Activated naive CD4-positive, alpha-beta T cell treated with anti-CD3 and anti-CD28 coated beads, Interleukin-2, amount 10 ng/mL, durations not matched to agents 7 days and 5 days (primary cell): ENCODE measurements at regions of chr5 and their contacts with region 1.

Region 1: GRCh38 chr5:115634343-115635132 is 8.7 kb upstream of the TMED7 start:
- DNase-seq: peak; percentile 89
- H3K4me3 Mint-ChIP-seq: peak overlapping the region; percentile 53
- H3K27ac Mint-ChIP-seq: peak overlapping the region; percentile 37
- H3K4me1 Mint-ChIP-seq: peaks cover 24% of the 10 kb centered on the region
- H3K27me3 Mint-ChIP-seq: peaks cover 34% of the 10 kb centered on the region

Region 2: GRCh38 chr5:115571441-115571878 is 63.1 kb before region 1 on chr5:
- CTCF ChIA-PET with region 1: no interaction called
- DNase-seq: no peak
- H3K4me3 Mint-ChIP-seq: no peak overlapping the region
- H3K27ac Mint-ChIP-seq: no peak overlapping the region
- H3K4me1 Mint-ChIP-seq: no peaks in the 10 kb centered on the region
- H3K27me3 Mint-ChIP-seq: peaks cover 8% of the 10 kb centered on the region

Region 3: DNA sequence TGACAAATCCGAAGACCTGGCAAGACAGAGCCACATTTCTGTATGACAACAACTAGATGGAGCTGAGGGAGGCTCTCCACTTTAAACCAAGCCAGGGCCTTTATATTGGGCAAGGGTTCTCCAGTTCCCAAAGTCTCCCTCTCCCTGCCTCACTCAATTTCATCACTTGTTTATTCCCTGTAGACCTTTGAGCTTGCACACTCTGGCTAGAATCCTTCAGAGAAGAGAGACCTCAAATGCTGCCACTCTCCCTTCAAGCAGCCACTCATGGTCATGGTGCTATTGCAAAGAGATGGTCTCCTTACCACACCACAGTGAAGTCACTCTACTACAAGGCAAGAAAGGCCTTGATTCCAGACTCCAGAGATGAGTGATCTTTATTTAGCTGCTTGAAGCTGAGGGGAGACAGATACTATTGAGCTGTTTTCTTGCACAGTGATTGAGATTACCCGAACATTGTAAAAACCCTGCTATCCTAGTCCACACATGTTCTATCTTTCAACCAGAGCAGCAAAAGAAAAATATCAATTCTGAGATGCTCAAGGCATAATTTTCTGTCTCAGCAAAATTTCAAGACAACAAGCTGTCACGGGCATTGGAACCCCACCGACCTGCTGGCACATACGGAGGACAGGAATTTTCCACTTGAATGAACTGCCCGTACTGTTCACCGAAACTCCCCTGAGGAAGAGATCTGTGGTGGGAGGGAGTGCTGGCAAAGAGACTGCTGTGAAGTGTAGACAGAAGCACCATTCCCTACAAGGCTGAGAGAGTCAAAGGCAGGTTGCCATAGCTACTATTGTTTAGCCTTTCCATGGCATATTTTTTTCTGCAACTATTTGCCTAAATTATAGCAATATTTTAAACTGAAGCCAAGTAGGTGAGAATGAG is 100.8 kb after region 1 on chr5:
- CTCF ChIA-PET with region 1: no interaction called
- DNase-seq: no peak
- H3K4me3 Mint-ChIP-seq: no peak overlapping the region
- H3K27ac Mint-ChIP-seq: no peak overlapping the region
- H3K4me1 Mint-ChIP-seq: peaks cover 3% of the 10 kb centered on the region
- H3K27me3 Mint-ChIP-seq: peaks cover 30% of the 10 kb centered on the region

Region 4: DNA sequence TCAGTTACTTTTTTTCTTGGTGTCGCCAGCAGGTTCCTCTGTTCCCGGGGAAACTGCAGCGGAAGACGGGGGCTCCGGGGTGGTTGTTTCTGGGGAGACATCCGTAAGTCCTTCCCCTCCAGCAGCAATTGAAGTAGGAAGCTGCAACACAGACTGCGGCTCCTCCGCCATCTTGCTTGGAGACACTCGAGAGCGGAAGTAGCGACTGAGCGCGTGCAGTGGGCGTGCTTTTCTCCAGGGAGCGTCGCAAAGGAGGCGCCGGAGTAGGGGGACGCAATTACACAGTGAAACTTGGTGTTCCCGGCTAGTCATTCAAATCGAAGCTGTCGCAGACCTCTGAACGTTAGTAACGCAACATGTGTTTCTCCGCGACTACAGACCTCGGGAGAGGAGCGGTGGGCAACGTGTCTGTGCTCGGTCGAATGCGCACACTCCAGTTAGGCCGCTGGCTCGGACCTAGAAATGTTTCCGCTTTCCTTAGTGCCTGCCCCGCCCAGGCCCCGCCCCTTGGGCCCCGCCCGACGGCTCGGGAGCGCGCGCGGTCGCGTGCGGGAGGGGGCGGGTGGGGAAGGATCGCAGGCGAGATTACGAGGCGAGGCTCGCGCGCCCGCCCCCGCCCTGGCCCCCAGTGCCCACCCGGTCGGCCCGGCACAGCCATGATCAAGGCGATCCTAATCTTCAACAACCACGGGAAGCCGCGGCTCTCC is 207.0 kb after region 1 on chr5 and contains the starts of genes AP3S1 and ATG12:
- CTCF ChIA-PET with region 1: interaction called, 19 read pairs
- DNase-seq: peak; percentile 95
- H3K4me3 Mint-ChIP-seq: peak within 1 kb of the TSS; percentile 98
- H3K27ac Mint-ChIP-seq: peak within 1 kb of the TSS; percentile 99
- H3K4me1 Mint-ChIP-seq: peaks cover 58% of the 10 kb centered on the region
- H3K27me3 Mint-ChIP-seq: no peaks in the 10 kb centered on the region

Region 5: GRCh38 chr5:116068028-116068632 is 433.6 kb after region 1 on chr5:
- CTCF ChIA-PET with region 1: interaction called, 21 read pairs
- DNase-seq: peak; percentile 35
- H3K4me3 Mint-ChIP-seq: no peak overlapping the region
- H3K27ac Mint-ChIP-seq: no peak overlapping the region
- H3K4me1 Mint-ChIP-seq: no peaks in the 10 kb centered on the region
- H3K27me3 Mint-ChIP-seq: peaks cover 20% of the 10 kb centered on the region

Region 6: DNA sequence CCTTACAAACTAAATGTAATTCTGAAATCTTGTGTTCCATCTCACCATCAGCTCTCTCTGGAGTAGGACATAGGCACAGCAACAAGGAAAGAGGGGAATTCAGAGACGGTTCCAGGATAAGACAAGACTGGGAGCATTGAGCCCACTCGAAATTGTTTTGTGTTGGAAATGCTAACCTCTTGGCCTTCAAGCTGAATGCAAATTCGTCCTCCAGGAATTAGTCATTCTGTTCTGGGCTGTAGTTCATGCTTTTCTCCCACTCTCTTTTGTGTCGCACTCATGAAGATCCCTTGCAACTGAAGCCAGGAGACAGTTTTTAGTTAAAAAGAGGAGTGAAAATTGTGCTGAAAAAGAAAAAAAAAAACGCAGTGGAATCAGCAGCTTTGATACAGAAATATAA is 1061.8 kb after region 1 on chr5:
- CTCF ChIA-PET with region 1: no interaction called
- DNase-seq: no peak
- H3K4me3 Mint-ChIP-seq: no peak overlapping the region
- H3K27ac Mint-ChIP-seq: no peak overlapping the region
- H3K4me1 Mint-ChIP-seq: no peaks in the 10 kb centered on the region
- H3K27me3 Mint-ChIP-seq: no peaks in the 10 kb centered on the region